ENCODE measurements at regions of chr6 and their contacts with region 1.

Region 1: DNA sequence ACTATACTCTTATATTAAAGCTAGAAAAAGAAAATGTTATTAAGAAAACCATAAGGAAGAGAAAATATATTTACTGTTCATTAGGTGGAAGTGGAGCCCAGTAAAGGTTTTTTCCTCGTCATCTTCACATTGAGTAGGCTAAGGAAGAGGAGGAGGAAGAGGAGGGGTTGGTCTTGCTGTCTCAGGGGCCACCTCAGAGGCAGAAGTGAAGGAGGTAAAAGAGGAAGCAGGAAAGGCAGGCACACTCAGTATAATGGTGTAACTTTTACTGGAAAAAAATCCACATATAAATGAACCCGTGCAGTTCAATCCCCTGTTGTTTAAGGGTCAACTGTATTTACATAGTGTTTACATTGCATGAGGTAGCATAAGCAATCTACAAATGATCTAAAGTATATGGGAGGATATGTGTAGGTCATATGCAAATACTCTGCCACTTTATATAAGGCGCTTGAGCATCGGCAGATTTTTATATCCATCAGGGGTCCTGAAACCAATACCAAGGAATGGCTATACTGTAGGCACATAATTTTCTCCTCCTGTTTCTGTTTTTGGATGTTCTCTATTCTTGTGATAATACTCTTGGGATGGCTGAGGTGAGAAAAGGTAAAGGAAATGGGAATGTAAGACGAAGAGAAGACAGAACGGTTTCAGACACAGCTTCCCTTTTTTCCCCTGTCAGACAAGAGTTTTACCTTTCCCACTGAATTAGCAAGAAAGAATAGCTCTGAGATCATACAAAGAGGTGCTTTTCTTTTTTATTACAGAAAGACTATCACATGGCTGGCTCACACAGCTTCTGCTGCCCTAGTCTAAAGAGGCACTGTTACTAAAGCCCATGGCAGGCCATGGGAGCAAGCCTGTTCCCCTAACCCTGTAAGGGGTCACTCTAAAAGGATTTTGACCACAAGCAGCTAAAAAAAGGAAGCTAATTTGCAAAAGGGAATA is 59.9 kb downstream of the NUDT3 start:
- DNase-seq: no peak
- ATAC-seq: peak in 1 of 4 donors; percentile 30
- H3K4me3 ChIP-seq: no peak overlapping the region
- H3K27ac ChIP-seq: peak overlapping the region in 11 of 12 donors; percentile 31 to 84 (median 74)
- H3K4me1 ChIP-seq: peaks cover 6 to 54% (median 38%) of the 10 kb centered on the region in 12 donors
- H3K27me3 ChIP-seq: no peaks in the 10 kb centered on the region
- CTCF ChIP-seq: no peak
- POLR2A ChIP-seq: no peak

Region 2: GRCh38 chr6:32868257-32868788 is 1464.2 kb before region 1 on chr6:
- intact Hi-C with region 1: no loop called
- DNase-seq: peak; percentile 64 to 85 (median 78)
- ATAC-seq: peak in 3 of 4 donors; percentile 56 to 73 (median 69)
- H3K4me3 ChIP-seq: no peak overlapping the region
- H3K27ac ChIP-seq: no peak overlapping the region
- H3K4me1 ChIP-seq: peaks cover 0 to 13% (median 0%) of the 10 kb centered on the region in 12 donors
- H3K27me3 ChIP-seq: peaks cover 0 to 6% (median 0%) of the 10 kb centered on the region in 9 donors
- CTCF ChIP-seq: peak; percentile 90 to 99 (median 96)
- POLR2A ChIP-seq: no peak

Region 3: DNA sequence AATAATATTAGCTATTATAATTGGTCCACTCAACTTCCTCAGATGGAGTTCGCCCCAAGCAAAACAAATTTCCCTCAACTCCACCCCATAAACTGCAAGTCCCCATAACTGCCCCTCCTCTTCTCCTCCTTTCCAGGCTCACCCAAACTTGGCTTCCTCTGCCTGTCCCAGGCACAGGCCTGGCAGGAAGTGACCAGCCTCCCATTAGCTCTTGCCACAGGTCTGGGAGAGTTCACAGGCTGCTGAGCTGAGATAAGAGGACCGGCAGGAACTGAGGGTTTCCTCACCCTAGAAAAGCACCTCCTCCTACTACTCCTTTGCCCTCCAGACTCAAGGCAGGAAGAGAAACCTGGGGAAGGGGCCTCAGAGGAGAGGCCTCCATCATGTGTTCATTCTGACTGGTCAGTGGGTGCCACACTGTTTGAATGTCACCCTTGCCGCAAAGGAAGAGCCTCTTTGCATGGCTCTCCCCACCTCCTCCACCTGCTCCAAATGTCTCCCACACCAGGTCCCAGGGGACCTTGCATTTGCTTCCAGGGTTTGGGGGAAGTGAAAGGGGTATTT is 59.2 kb before region 1 on chr6:
- intact Hi-C with region 1: loop called in 1 of 10 experiments (anchors 10 kb)
- DNase-seq: peak; percentile 72 to 82 (median 78)
- ATAC-seq: peak; percentile 64 to 93 (median 84)
- H3K4me3 ChIP-seq: no peak overlapping the region
- H3K27ac ChIP-seq: peak overlapping the region in 11 of 12 donors; percentile 41 to 73 (median 59)
- H3K4me1 ChIP-seq: peaks cover 0 to 52% (median 26%) of the 10 kb centered on the region in 12 donors
- H3K27me3 ChIP-seq: no peaks in the 10 kb centered on the region
- CTCF ChIP-seq: no peak
- POLR2A ChIP-seq: no peak

Region 4: GRCh38 chr6:34301408-34301807 is 31.1 kb before region 1 on chr6:
- intact Hi-C with region 1: loop called in 1 of 10 experiments (anchors 2 kb)
- DNase-seq: peak in 4 of 5 donors; percentile 85 to 89 (median 86)
- ATAC-seq: peak; percentile 87 to 97 (median 94)
- H3K4me3 ChIP-seq: no peak overlapping the region
- H3K27ac ChIP-seq: peak overlapping the region; percentile 6 to 84 (median 68)
- H3K4me1 ChIP-seq: peaks cover 13 to 85% (median 63%) of the 10 kb centered on the region in 12 donors
- H3K27me3 ChIP-seq: no peaks in the 10 kb centered on the region
- CTCF ChIP-seq: no peak
- POLR2A ChIP-seq: no peak

Region 5: DNA sequence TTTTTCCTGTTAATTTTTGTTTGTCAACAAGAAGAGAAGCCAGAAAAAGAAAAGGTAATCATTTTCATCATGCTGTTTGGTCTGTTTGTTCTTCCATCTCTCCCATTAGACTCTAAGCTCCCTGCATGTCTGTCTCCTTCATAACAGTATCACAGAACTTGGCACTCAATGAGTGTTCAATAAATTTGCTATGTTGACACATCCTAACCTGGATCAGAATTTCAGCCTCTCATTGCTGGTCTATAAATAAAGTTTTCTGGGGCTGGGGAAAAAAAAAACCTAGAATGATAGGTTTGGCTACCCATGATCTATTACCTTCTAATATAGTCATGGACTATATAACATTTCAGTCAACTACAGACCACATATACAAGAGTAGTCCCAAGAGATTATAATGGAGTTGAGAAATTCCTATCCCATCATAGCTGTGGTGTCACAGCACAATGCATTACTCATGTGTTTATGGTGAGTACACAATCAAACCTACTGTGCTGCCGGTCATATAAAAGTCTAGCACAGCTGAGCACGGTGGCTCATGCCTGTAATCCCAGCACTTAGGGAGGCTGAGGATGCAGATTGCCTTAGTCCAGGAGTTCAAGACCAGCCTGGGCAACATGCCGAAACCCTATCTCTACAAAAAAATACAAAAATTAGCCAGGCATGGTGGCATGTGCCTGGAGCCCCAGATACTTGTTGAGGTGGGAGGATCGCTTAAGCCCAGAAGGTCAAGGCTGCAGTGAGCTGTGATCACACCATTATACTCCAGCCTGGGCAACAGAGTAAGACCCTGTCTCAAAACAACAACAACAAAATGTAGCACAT is 54.0 kb after region 1 on chr6:
- intact Hi-C with region 1: loop called in 2 of 10 experiments (anchors 5 to 10 kb)
- DNase-seq: no peak
- ATAC-seq: no peak
- H3K4me3 ChIP-seq: no peak overlapping the region
- H3K27ac ChIP-seq: no peak overlapping the region
- H3K4me1 ChIP-seq: peaks cover 0 to 80% (median 63%) of the 10 kb centered on the region in 12 donors
- H3K27me3 ChIP-seq: no peaks in the 10 kb centered on the region
- CTCF ChIP-seq: no peak
- POLR2A ChIP-seq: no peak

Measured in heart left ventricle (tissue), 16 donors.